Activated CD4-positive, alpha-beta T cell treated with anti-CD3 and anti-CD28 coated beads, Interleukin-2, amount 10 ng/mL, durations not matched to agents 7 days and 5 days (primary cell): ENCODE measurements at regions of chr6 and their contacts with region 1.

Region 1: DNA sequence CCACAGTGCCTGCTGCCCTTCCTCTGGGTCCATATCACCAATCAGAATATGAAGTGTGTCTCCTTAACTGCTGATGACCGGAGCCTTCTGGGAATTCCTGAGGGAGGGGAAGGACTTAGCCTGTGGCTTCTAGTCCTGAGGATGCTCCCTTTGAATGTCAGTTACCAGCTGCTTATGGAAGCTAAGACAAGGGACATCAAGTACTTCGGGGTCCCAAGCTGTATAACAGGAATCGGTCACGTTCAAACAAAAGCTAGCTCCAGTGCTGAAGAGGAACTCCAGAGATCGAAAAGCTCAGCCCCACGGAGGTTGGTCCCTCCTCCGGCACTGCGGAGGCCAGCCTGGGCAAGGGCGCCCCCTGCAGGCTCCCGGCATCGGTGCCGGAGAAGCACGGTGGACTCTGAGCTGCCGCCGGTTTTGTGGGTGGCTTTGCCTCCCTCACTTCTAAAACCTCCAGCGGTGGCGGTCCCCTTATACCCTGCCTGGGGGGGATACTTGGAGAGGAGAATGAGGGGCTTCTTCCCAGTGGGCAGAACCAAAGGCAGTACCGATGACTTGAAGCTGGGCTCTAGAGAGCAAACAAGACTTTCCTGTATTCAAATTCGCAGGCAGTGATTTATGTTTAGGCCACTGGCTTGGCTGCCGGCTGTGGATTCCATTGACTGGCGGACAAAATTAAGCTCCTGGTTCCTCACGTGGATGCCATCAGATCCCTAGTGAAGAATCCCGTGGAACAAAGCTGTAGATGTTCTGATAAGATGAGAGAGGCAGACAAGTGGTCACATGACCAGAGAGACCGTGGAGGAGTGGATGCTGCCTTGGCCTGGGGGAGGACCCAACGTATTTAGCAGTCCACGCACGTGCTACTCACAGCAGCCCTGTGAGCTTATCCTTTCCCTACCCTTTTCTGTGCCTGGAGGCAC is 16.2 kb upstream of the UBR2 start:
- DNase-seq: peak; percentile 87
- H3K4me3 Mint-ChIP-seq: peak overlapping the region; percentile 63
- H3K27ac Mint-ChIP-seq: peak overlapping the region; percentile 78
- H3K4me1 Mint-ChIP-seq: peaks cover 19% of the 10 kb centered on the region
- H3K27me3 Mint-ChIP-seq: peaks cover 5% of the 10 kb centered on the region

Region 2: DNA sequence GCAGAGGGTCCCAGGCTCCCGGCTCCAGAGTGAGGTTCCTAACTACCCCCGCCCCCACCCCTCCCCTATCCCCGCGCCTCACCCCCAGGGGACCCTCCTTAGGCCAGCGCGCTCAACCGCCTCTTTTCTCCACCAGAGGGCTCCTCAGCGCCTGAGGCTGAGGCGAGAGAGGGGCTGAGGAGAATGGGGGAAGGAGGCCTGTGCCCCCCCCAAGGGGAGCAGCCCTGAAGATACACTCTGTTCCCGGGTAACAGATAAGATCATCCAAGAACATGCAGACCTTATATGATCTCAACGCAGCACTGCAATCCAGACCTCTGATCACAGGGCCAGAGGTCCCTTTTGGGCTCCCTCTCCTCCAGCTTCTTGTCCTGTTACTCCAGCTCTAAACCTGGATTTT is 286.7 kb before region 1 on chr6:
- CTCF ChIA-PET with region 1: interaction called, 13 read pairs
- POLR2A ChIA-PET with region 1: no interaction called
- DNase-seq: peak; percentile 43
- H3K4me3 Mint-ChIP-seq: no peak overlapping the region
- H3K27ac Mint-ChIP-seq: no peak overlapping the region
- H3K4me1 Mint-ChIP-seq: peaks cover 7% of the 10 kb centered on the region
- H3K27me3 Mint-ChIP-seq: no peaks in the 10 kb centered on the region

Region 3: GRCh38 chr6:42390228-42390934 is 157.3 kb before region 1 on chr6:
- CTCF ChIA-PET with region 1: interaction called, 10 read pairs
- POLR2A ChIA-PET with region 1: no interaction called
- DNase-seq: peak; percentile 68
- H3K4me3 Mint-ChIP-seq: peak overlapping the region; percentile 63
- H3K27ac Mint-ChIP-seq: peak overlapping the region; percentile 99
- H3K4me1 Mint-ChIP-seq: peaks cover 89% of the 10 kb centered on the region
- H3K27me3 Mint-ChIP-seq: no peaks in the 10 kb centered on the region

Region 4: DNA sequence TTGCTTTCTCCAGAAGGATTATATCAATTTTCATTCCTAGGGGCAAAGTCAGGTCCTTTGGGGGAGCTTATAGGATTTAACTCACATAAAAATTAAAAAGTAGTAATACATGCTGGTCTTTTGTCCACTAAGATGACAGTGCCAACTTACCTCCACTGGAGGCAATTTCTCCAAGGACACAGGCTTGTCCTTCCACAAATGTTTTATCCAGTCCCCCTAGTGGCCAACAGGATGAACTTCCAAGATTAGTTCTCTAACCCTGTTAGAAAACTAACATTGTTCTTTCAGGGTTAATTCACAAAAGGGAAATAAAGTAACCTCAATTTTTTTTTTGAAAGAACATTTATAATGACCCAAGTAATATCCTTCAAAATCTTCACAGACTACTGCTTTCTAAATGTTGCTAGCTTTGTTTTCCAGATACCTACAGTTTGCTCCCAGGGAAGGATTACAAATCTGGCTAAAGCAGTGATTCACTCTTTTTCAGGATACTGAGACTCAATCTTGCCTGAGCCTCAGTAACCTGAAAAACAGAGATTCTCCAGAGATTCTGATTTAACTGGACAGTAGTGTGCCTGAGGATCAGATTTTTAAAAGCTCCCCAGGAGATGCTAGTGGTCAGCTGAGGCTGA is 15.5 kb before region 1 on chr6:
- CTCF ChIA-PET with region 1: interaction called, 30 read pairs
- POLR2A ChIA-PET with region 1: no interaction called
- DNase-seq: peak; percentile 41
- H3K4me3 Mint-ChIP-seq: no peak overlapping the region
- H3K27ac Mint-ChIP-seq: no peak overlapping the region
- H3K4me1 Mint-ChIP-seq: no peaks in the 10 kb centered on the region
- H3K27me3 Mint-ChIP-seq: no peaks in the 10 kb centered on the region

Region 5: DNA sequence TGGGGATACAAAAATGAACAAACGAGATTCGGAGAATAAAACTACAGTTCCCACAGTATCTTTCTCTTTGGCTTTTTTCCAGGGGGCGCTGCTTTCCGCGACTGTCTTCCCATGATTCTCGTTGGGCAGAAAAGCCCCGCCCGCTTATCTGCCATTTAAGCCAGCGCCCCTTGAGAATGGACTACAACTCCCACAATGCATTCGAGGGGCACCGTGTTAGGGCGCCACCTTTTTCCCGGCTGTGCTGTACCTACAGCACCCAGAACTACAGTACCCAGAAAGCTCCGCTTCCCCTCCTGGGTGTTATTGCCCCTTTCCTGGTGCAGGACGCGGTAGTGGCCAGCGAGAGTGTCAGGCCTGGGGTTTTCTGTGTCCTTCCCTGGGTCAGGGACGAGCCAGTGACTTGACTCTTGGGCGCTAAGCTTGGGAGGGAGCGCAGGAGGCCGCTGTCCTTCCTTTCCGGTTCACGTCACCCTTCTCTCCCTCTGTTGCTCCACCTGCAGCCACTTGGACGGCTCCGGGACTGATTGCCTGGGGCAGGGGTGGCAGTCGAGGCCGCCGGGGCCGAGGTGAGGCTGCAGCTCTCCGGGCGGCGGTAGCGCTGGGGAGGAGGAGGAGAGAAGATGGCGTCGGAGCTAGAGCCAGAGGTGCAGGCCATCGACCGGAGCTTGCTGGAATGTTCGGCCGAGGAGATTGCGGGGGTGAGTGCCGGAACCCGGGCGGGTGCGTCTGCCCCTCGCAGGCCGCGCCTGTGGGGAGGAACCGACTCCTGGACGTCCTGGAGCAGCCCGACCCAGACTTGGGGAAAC is 16.2 kb after region 1 on chr6 and contains the start of gene UBR2:
- CTCF ChIA-PET with region 1: interaction called, 48 read pairs
- POLR2A ChIA-PET with region 1: interaction called, 3 read pairs
- DNase-seq: peak; percentile 97
- H3K4me3 Mint-ChIP-seq: peak within 1 kb of the TSS; percentile 99
- H3K27ac Mint-ChIP-seq: peak within 1 kb of the TSS; percentile 95
- H3K4me1 Mint-ChIP-seq: peaks cover 33% of the 10 kb centered on the region
- H3K27me3 Mint-ChIP-seq: no peaks in the 10 kb centered on the region
- total RNA-seq, gene UBR2: 30.2 to 32.1 TPM